ENCODE measurements at regions of chr18 and their contacts with region 1.

Region 1: GRCh38 chr18:22800551-22800951 is 132.6 kb upstream of the RBBP8 start:
- DNase-seq: no peak
- ATAC-seq: no peak
- H3K4me3 Mint-ChIP-seq: no peak overlapping the region
- H3K27ac Mint-ChIP-seq: no peak overlapping the region
- H3K4me1 Mint-ChIP-seq: no peaks in the 10 kb centered on the region
- H3K27me3 Mint-ChIP-seq: peaks cover 2% of the 10 kb centered on the region

Region 2: GRCh38 chr18:22813648-22814328 is 13.2 kb after region 1 on chr18:
- CTCF ChIA-PET with region 1: interaction called, 10 read pairs
- POLR2A ChIA-PET with region 1: interaction called, 3 read pairs
- intact Hi-C with region 1: no loop called
- DNase-seq: peak; percentile 19
- ATAC-seq: no peak
- H3K4me3 Mint-ChIP-seq: no peak overlapping the region
- H3K27ac Mint-ChIP-seq: no peak overlapping the region
- H3K4me1 Mint-ChIP-seq: no peaks in the 10 kb centered on the region
- H3K27me3 Mint-ChIP-seq: peaks cover 21% of the 10 kb centered on the region

Region 3: DNA sequence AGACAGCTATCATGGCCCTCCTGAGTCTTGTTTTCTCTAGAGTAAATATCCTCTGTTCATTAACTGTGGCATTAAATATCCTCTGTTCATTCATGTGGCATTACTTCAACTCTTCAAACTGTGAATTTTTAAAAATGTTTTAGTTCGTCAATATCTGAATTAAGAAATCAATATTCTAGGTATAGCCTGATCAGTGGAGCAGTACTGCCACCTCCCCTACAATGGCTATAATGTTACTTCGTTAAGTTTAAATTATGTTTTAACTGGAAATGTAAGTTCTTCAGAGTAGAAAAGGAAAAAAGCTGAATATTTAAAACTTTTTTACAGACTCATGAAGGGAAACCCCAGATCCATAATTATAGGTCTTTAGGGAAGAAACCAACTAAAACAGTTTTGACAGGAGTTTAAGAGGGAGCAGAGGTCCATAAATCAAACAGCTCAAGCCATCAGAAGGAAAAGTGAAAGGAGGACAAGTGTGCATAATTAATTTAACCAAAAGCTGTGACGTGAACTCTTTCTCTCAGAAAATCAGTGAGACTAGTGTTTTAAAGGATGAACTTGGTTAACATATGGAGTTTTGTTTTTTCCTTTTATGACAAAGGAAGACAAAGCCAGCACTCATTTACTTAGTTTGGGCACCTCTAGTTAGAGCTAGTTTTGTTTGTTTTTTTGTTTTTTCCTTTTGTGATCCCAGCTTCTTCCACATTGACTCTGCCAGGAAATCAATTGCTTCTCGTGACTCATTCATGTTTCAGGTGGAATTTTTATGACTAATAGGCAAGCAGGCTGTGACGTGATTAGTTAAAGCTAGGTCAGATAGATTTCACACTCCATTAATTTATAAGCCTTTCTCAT is 177.5 kb after region 1 on chr18:
- CTCF ChIA-PET with region 1: interaction called, 25 read pairs
- POLR2A ChIA-PET with region 1: no interaction called
- intact Hi-C with region 1: loop called (anchors 1 to 2 kb)
- DNase-seq: no peak
- ATAC-seq: peak; percentile 83
- H3K4me3 Mint-ChIP-seq: peak overlapping the region; percentile 46
- H3K27ac Mint-ChIP-seq: peak overlapping the region; percentile 73
- H3K4me1 Mint-ChIP-seq: peaks cover 20% of the 10 kb centered on the region
- H3K27me3 Mint-ChIP-seq: no peaks in the 10 kb centered on the region

Region 4: GRCh38 chr18:22983175-22983574 is 182.6 kb after region 1 on chr18:
- CTCF ChIA-PET with region 1: interaction called, 25 read pairs
- POLR2A ChIA-PET with region 1: no interaction called
- intact Hi-C with region 1: loop called (anchors 1 to 2 kb)
- DNase-seq: no peak
- ATAC-seq: no peak
- H3K4me3 Mint-ChIP-seq: no peak overlapping the region
- H3K27ac Mint-ChIP-seq: no peak overlapping the region
- H3K4me1 Mint-ChIP-seq: peaks cover 7% of the 10 kb centered on the region
- H3K27me3 Mint-ChIP-seq: no peaks in the 10 kb centered on the region